Activated CD4-positive, alpha-beta T cell treated with anti-CD3 and anti-CD28 coated beads, Interleukin-2, amount 10 ng/mL, durations not matched to agents 24 days and 14 days (primary cell): ENCODE measurements at regions of chr15 and their contacts with region 1.

Region 1: DNA sequence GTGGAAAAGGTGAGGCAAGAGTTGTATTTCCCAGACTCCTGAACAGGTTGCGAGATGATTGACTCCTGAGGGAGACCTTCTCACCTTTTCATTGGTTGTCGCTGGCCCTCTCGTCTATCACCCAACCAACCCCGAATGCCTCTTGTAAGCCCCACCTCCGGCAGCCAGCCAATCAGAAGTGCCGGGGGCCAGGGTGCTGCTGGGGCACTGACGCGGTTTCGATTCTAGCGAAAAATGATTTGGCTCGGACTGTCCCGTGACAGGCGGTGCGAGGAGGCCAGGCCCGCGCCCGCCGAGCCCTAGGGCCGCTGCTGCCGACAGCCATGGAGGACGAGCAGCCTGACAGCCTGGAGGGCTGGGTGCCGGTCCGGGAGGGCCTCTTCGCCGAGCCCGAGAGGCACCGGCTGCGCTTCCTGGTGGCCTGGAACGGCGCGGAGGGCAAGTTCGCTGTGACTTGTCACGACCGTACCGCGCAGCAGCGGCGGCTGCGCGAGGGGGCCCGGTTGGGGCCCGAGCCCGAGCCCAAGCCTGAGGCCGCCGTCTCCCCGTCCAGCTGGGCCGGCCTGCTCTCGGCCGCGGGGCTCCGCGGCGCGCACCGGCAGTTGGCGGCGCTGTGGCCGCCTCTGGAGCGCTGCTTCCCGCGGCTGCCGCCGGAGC is at the start of gene WHAMM:
- DNase-seq: peak; percentile 99
- H3K4me3 Mint-ChIP-seq: peak within 1 kb of the TSS; percentile 88
- H3K27ac Mint-ChIP-seq: peak within 1 kb of the TSS; percentile 95
- H3K4me1 Mint-ChIP-seq: peaks cover 20% of the 10 kb centered on the region
- H3K27me3 Mint-ChIP-seq: peaks cover 14% of the 10 kb centered on the region
- total RNA-seq, gene WHAMM: 5.1 and 6.7 TPM in 2 replicates

Region 2: DNA sequence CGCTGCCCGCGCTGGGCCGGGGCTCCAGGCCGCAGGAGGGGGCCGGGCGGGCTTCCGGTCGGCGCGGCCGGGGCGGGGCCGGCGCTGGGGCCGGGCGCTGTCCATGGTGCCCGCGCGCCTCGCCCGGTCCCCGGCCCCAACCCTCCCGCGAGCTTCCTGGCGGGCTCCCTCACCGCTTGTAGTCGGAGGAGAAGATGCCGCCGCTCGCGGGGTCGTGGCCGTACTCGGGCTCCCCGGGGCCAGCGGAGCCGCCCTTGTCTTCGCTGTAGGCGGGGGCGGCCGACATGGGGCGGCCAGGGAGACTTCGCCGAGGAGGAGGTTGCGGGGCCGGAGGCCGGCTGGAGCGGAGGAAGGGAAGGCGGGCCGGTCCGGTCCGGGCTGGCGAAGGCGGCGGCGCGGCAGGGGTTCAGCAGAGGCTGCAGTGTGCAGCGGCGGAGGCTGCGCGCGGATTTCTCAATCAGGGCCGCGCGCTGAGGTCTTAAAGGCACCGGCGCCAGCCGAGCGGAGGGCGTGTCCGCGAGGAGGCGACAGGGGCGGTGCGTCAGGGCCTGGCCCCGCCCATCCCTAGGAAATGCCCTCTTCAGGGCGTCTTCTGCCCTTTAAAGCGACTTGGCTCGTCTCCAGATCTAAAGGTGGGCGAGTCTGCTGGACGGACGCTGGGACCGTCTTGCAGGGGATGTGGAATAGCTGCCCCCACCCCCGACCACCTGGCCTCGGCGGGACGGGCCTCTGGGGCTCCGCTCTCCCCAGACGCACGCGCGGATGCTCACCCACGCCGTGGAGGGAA is 99.9 kb before region 1 on chr15 and contains the start of gene AP3B2:
- intact Hi-C with region 1: loop called (anchors 1 kb)
- DNase-seq: peak; percentile 93
- H3K4me3 Mint-ChIP-seq: peak within 1 kb of the TSS; percentile 65
- H3K27ac Mint-ChIP-seq: no peak within 1 kb of the TSS
- H3K4me1 Mint-ChIP-seq: no peaks in the 10 kb centered on the region
- H3K27me3 Mint-ChIP-seq: peaks cover 6% of the 10 kb centered on the region
- total RNA-seq, gene AP3B2: not detected in 2 replicates

Region 3: DNA sequence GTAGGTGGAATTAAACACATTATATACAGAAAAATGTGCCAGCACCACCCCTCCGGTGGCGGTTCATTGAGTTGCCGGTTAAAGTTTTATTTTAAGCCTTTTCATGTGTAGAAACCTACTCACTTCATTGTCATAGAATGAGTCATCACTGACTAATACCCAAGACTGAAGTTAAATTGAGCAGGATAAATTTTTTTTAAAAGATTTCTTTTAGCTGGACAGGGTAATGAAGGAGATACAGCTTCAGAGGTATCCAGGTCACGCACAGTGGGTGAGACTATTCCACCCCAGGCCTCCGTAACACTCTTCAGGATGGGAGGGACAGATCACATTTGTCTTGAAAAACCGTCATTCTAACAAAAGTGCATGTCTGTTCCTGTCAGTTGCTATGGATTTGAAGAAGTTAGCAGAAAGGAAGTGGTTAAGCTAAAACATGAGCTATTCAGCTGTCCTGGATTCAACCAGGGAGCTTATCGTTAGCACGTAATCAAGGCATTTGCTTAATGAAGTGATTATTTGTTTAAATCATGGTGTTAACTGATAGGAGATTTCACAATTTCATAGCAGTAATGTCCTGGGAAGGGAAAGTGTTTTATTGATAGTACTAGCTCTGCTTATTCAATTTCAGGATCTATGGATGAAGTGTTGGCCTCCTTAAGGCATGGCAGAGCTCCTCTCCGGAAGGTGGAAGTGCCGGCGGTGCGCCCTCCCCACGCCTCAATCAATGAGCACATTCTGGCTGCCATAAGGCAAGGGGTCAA is 23.2 kb after region 1 on chr15:
- intact Hi-C with region 1: loop called (anchors 1 kb)
- DNase-seq: peak; percentile 80
- H3K4me3 Mint-ChIP-seq: peak overlapping the region; percentile 65
- H3K27ac Mint-ChIP-seq: peak overlapping the region; percentile 95
- H3K4me1 Mint-ChIP-seq: peaks cover 40% of the 10 kb centered on the region
- H3K27me3 Mint-ChIP-seq: no peaks in the 10 kb centered on the region

Region 4: GRCh38 chr15:82985688-82986441 is 176.3 kb after region 1 on chr15 and contains the start of gene RAMAC:
- intact Hi-C with region 1: loop called (anchors 1 kb)
- DNase-seq: peak; percentile 97
- H3K4me3 Mint-ChIP-seq: peak within 1 kb of the TSS; percentile 97
- H3K27ac Mint-ChIP-seq: peak within 1 kb of the TSS; percentile 95
- H3K4me1 Mint-ChIP-seq: peaks cover 27% of the 10 kb centered on the region
- H3K27me3 Mint-ChIP-seq: no peaks in the 10 kb centered on the region
- total RNA-seq, gene RAMAC: 23.9 and 26.4 TPM in 2 replicates

Region 5: DNA sequence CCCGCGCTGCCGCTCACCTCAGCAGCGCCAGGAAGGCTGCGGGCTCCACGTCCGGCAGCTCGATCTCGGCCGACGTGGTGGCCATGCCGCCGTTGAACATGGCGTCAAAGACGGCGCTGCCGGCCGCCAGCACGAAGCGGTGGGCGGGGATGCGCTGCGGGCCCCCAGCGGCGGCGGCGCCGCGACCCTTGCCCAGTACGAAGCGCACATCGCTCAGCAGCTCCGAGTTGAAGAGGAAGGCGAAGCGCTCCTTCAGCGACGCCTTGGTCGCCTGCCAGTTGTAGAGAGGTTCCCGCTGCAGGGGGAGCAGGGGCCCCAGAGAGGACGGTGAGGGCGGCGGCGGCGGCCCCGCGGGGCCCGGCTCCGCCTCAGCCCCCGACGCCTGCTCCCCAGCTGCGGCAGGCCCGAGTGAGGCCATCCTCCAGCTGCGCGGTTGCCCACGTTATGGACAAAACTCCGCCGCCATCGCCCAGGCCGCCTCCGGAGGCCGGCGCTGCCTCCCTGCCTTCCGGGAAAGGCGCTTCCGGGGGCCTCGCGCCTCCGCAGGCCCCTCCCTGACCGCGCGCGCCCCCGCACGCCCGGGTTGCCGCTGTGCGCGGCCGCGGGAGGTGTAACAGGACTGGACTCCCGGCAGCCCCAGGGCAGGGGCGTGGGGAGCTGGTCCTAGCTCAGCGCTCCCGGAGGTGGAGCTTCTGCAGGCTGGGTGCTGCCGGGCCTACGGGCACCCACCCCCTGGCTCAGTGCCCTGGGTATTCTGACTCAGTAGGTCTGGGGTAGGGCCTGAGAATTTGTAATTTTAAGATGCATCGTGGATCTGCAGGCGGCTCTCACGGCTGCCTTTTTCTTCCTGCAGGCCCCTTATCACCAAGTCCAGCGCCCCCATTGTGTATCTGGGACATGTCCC is 257.5 kb after region 1 on chr15 and contains the start of gene BTBD1:
- intact Hi-C with region 1: no loop called
- DNase-seq: peak; percentile 96
- H3K4me3 Mint-ChIP-seq: peak within 1 kb of the TSS; percentile 54
- H3K27ac Mint-ChIP-seq: peak within 1 kb of the TSS; percentile 87
- H3K4me1 Mint-ChIP-seq: peaks cover 24% of the 10 kb centered on the region
- H3K27me3 Mint-ChIP-seq: peaks cover 1% of the 10 kb centered on the region
- total RNA-seq, gene BTBD1: 61.7 and 62.7 TPM in 2 replicates